Activated B cell treated with CpG ODN at 0.5 μM for 24 hours (primary cell): ENCODE measurements at regions of chr4 and their contacts with region 1.

Region 1: GRCh38 chr4:140861359-140862176 is 105.4 kb upstream of the TBC1D9 start:
- DNase-seq: no peak
- ATAC-seq: peak; percentile 67
- H3K4me3 Mint-ChIP-seq: no peak overlapping the region
- H3K27ac Mint-ChIP-seq: no peak overlapping the region
- H3K4me1 Mint-ChIP-seq: peaks cover 14% of the 10 kb centered on the region
- H3K27me3 Mint-ChIP-seq: peaks cover 2% of the 10 kb centered on the region
- CTCF ChIP-seq: no peak

Region 2: DNA sequence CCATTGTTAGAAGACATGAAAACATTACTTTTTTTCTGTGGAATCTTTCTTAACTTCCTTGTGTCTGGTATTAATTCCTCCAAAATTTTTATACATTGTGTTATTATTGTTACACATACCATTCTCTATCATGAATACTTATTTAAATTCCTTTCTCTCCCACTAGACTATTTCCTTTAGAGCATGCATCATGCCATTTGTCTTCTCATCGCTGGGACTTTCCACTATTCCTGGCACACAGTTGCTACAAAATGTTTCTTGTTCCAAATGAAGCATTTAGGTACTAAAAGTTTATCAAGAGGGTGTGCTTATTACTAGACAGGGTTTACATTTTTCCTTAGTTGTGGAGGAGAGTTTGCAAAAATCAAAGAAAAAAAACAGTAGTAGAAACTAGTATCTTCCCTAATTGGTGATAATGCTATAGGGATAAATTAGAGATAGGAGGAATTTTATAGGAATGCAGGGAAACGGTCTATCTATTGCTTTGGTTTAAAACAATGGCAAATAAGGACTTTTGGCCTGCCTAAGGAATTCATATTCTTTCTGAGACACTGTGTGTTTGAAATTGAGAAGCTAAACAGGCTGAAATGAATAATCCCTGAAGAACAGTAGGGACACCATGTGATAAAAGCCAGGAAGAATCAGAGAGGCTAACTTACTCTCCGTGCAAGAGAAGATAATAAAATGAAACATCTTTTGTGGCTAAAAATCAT is 82.1 kb after region 1 on chr4:
- CTCF ChIA-PET with region 1: no interaction called
- POLR2A ChIA-PET with region 1: no interaction called
- intact Hi-C with region 1: no loop called
- DNase-seq: no peak
- ATAC-seq: no peak
- H3K4me3 Mint-ChIP-seq: no peak overlapping the region
- H3K27ac Mint-ChIP-seq: no peak overlapping the region
- H3K4me1 Mint-ChIP-seq: no peaks in the 10 kb centered on the region
- H3K27me3 Mint-ChIP-seq: peaks cover 7% of the 10 kb centered on the region
- CTCF ChIP-seq: no peak

Region 3: DNA sequence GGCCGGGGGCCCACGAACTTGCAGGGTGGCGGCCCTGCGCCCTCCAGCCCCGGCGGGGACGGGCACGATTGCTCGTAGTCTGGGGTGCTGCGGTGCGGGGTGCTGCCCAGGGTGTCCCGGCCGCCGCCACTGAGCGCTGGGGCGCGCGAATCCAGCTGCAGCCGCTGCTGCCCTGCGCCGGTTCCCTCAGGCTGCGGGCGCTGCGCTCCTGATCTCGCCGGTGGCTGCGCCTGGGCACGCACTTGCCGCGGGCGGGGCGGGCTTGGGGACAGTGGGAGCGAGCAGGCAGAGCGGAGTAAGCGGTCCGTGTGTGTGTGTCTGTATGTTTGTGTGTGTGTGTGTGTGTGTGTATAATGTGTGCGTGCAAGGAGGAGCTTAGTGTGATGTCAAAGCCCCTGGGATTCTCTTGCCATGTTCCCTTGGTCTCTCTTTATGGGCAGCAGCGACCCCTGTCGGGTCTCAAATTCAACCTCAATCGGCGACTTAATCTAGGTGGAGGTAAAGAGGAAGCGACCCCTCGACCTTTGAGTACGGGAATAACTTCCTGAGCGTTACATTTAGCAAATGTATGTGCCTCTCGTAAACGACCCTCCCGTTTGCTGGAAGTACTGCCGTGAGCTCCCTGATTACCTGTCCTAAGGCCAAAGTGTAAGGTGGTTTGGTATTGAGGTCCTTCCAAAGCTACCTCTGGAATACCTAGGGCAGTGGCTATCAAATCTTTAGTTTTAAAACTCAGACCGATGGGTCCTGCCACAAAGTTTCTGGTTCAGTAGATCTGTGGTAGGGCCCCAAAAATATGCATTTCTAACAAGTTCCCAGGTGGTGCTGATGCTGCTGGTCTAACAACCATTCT is 271.8 kb after region 1 on chr4 and contains the start of gene RNF150:
- CTCF ChIA-PET with region 1: no interaction called
- POLR2A ChIA-PET with region 1: no interaction called
- intact Hi-C with region 1: loop called (anchors 1 kb)
- DNase-seq: peak; percentile 32
- ATAC-seq: peak; percentile 71
- H3K4me3 Mint-ChIP-seq: peak within 1 kb of the TSS; percentile 84
- H3K27ac Mint-ChIP-seq: no peak within 1 kb of the TSS
- H3K4me1 Mint-ChIP-seq: peaks cover 17% of the 10 kb centered on the region
- H3K27me3 Mint-ChIP-seq: peaks cover 62% of the 10 kb centered on the region
- CTCF ChIP-seq: no peak
- total RNA-seq, gene RNF150: not detected in 2 replicates